ENCODE measurements at regions of chr1 and their contacts with region 1.

Region 1: DNA sequence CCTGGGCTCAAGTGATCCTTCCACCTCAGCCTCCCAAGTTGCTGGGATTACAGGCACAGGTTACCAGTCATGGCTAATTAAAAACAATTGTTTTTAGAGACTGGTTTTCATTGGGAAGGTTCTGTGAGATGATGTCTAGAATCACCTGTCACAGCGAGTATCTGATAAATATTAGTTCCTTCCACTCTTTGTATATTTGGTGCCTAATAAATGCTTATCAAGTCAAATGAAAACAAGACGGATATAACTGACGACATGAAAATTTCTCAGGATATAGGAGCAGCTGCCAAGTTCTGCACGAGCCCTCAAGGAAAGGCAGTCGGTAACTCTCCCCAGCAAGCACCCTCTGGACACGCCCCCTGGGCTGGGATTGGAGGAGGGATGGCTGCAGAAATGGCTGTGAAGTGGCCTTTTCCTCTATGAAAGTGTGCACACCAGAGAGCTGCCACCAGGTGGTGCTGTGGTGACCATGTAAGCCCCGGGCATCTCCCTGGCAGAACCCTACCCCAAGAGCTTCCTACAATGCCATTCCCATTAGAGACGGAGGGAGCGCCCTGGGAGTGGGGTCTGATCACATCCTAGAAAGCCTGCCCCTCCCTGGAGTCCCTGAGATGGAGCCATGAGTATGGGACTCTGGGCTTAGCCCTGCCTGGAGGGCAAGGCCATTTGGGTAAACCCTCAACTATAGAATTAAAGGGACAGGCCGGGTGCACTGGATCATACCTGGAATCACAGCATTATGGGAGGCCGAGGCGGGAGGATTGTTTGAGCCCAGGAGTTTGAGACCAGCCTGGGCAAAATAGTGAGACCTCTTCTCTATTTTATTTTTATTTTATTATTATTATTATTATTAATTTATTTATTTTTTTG is 50.9 kb downstream of the HTR6 start:
- DNase-seq: peak; percentile 93
- ATAC-seq: peak; percentile 99
- H3K4me3 ChIP-seq: no peak overlapping the region
- H3K27ac ChIP-seq: no peak overlapping the region
- H3K4me1 ChIP-seq: peaks cover 0 to 8% of the 10 kb centered on the region in 2 experiments; a peak in 2 of 4 replicates
- H3K27me3 ChIP-seq: no peaks in the 10 kb centered on the region
- CTCF ChIP-seq: peak; percentile 89 to 95 (median 95)
- POLR2A ChIP-seq: no peak
- RAD21 ChIP-seq: peak; percentile 74

Region 2: GRCh38 chr1:19704247-19705113 is 11.1 kb before region 1 on chr1:
- CTCF ChIA-PET with region 1: interaction called, 43 read pairs
- POLR2A ChIA-PET with region 1: no interaction called
- RAD21 ChIA-PET with region 1: no interaction called
- intact Hi-C with region 1: no loop called
- DNase-seq: peak; percentile 28
- ATAC-seq: peak; percentile 98
- H3K4me3 ChIP-seq: no peak overlapping the region
- H3K27ac ChIP-seq: no peak overlapping the region
- H3K4me1 ChIP-seq: peaks cover 0 to 3% of the 10 kb centered on the region in 2 experiments; a peak in 1 of 4 replicates
- H3K27me3 ChIP-seq: no peaks in the 10 kb centered on the region
- CTCF ChIP-seq: peak; percentile 67 to 93 (median 91)
- POLR2A ChIP-seq: no peak
- RAD21 ChIP-seq: peak; percentile 61

Region 3: DNA sequence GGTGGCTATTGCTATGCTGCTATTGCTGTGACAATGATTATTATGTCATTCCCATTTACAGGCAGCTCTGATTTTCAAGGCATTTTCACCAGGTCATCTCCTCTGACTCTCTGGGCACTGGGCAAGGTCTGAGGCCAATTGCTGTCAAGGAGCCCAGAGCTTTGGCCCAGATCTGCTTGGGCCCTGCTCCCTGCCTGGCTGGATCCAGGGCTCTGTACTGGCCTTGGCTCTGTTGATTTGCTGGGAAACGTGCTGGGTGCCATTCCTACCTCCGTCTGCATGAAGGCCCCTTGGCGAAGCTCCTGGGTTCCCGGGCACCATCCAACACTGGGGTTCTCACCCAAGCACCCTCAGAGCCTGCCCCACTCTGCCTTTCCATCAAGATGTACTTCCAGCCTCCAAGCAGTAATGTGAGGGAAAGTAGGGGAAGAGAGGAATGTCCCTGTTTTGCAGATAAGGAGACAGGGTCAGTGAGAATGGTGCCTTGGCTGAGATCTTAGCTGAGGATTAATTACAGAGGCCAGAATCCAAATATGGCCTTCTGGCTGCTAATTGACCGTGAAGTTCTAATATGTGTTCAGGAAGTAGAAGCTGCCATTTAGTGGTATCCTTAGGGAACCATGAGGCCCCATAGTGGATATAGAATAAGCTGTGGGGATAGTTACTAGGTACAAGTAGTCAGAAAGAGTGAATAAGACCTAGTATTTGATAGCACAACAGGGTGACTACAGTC is 13.0 kb after region 1 on chr1:
- CTCF ChIA-PET with region 1: interaction called, 12 read pairs
- POLR2A ChIA-PET with region 1: no interaction called
- RAD21 ChIA-PET with region 1: no interaction called
- intact Hi-C with region 1: no loop called
- DNase-seq: no peak
- ATAC-seq: no peak
- H3K4me3 ChIP-seq: no peak overlapping the region
- H3K27ac ChIP-seq: no peak overlapping the region
- H3K4me1 ChIP-seq: no peaks in the 10 kb centered on the region
- H3K27me3 ChIP-seq: no peaks in the 10 kb centered on the region
- CTCF ChIP-seq: no peak
- POLR2A ChIP-seq: no peak
- RAD21 ChIP-seq: no peak